Mammary epithelial cell (primary cell): ENCODE measurements at regions of chr18 and their contacts with region 1.

Region 1: GRCh38 chr18:49041435-49042245 is 90.9 kb upstream of the SMAD7 start:
- DNase-seq: peak; percentile 40
- H3K4me3 ChIP-seq: no peak overlapping the region
- H3K27ac ChIP-seq: no peak overlapping the region
- H3K4me1 ChIP-seq: no peaks in the 10 kb centered on the region
- H3K27me3 ChIP-seq: no peaks in the 10 kb centered on the region
- CTCF ChIP-seq: peak; percentile 79 to 80

Region 2: GRCh38 chr18:48675352-48675761 is 366.3 kb before region 1 on chr18:
- CTCF ChIA-PET with region 1: no interaction called
- dilution Hi-C with region 1: no loop called
- in situ Hi-C with region 1: no loop called
- intact Hi-C with region 1: loop called (anchors 1 kb)
- DNase-seq: peak; percentile 71
- H3K4me3 ChIP-seq: no peak overlapping the region
- H3K27ac ChIP-seq: no peak overlapping the region
- H3K4me1 ChIP-seq: peaks cover 3% of the 10 kb centered on the region
- H3K27me3 ChIP-seq: no peaks in the 10 kb centered on the region
- CTCF ChIP-seq: peak; percentile 95 to 96

Region 3: GRCh38 chr18:48940854-48941611 is 100.6 kb before region 1 on chr18:
- CTCF ChIA-PET with region 1: no interaction called
- dilution Hi-C with region 1: loop called (anchors 5 kb)
- in situ Hi-C with region 1: no loop called
- intact Hi-C with region 1: no loop called
- DNase-seq: no peak
- H3K4me3 ChIP-seq: no peak overlapping the region
- H3K27ac ChIP-seq: no peak overlapping the region
- H3K4me1 ChIP-seq: peaks cover 77% of the 10 kb centered on the region
- H3K27me3 ChIP-seq: no peaks in the 10 kb centered on the region
- CTCF ChIP-seq: no peak

Region 4: DNA sequence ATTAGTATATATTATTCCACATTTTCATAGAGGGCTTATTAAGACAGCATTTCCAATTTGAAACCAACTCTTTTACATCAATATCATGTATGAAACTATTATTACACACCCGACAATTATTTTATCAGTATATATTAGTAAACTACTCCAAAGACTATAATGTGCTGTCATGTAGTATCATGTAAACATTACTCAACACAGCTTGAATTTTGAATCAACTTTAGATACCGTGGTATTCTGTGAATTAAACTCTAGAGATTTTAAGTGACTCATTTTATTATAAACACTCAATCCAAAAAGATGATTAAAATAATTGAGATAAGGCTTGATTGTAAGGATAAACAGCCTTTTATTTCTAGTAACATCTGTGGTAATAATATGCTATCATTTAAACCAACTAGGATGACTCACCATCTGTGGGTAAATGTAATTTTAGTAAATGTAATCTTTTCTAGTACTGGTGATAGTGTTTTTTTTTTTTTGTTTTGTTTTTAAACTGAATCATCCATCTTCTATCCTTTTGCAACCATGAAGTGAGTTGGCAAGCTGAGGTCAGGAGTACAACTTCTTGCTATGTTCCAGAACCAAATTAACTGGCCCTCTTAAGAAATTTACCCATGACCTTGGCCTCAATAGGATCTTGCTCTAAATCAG is 53.5 kb after region 1 on chr18:
- CTCF ChIA-PET with region 1: no interaction called
- dilution Hi-C with region 1: no loop called
- in situ Hi-C with region 1: no loop called
- intact Hi-C with region 1: no loop called
- DNase-seq: peak; percentile 82
- H3K4me3 ChIP-seq: no peak overlapping the region
- H3K27ac ChIP-seq: no peak overlapping the region
- H3K4me1 ChIP-seq: peaks cover 5% of the 10 kb centered on the region
- H3K27me3 ChIP-seq: no peaks in the 10 kb centered on the region
- CTCF ChIP-seq: no peak

Region 5: GRCh38 chr18:49238433-49239042 is 196.9 kb after region 1 on chr18:
- CTCF ChIA-PET with region 1: no interaction called
- dilution Hi-C with region 1: no loop called
- in situ Hi-C with region 1: no loop called
- intact Hi-C with region 1: loop called (anchors 5 kb)
- DNase-seq: no peak
- H3K4me3 ChIP-seq: no peak overlapping the region
- H3K27ac ChIP-seq: no peak overlapping the region
- H3K4me1 ChIP-seq: peaks cover 2% of the 10 kb centered on the region
- H3K27me3 ChIP-seq: no peaks in the 10 kb centered on the region
- CTCF ChIP-seq: peak; percentile 44 to 53

Region 6: DNA sequence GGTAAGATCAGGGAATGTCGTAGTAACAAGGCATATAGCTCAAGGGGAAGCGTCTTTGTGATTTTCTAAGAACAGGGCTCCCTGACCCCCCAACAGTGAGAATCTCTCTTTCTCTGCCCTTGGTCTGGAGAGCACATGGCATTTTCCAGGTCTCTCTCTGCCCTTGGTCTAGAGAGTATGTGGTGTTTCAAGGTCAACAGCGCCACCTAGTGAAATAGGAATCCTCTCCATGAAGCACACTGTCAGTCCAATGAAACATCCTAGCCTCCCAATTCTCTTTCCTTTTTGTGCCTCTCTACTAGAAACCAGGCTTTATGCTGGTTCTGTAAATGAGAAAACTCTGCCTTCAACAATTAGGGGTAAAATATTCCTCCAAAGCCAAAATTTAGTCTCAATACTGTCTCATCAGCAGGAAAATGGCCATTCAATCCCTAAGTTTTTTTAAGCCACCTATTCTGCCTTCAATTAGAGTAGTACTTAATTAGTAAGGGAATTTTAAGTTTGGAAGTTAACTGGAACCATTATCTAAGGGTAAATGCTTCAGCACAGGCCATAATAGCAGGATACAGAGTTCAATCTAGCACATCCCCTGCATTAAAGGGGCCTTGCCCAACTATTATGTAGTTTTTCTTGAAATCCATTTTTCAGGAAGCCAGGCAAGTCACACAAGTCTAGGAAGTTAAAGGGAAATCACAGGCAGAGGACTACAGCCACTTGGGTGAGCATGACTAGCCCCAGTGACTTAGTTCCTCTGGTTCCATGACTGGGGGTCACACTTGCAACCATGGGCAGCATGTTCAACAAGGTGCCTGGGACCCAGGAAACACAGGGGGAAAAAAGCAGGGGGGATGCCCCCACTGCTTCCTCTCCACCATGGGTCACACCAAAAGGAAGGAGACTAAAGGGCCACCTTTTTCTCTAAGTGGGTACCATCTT is 406.4 kb after region 1 on chr18:
- CTCF ChIA-PET with region 1: no interaction called
- dilution Hi-C with region 1: no loop called
- in situ Hi-C with region 1: no loop called
- intact Hi-C with region 1: loop called (anchors 10 kb)
- DNase-seq: peak; percentile 63
- H3K4me3 ChIP-seq: no peak overlapping the region
- H3K27ac ChIP-seq: no peak overlapping the region
- H3K4me1 ChIP-seq: no peaks in the 10 kb centered on the region
- H3K27me3 ChIP-seq: no peaks in the 10 kb centered on the region
- CTCF ChIP-seq: peak; percentile 71 to 72